Activated CD4-positive, alpha-beta T cell treated with anti-CD3 and anti-CD28 coated beads for 36 hours (primary cell): ENCODE measurements at regions of chr1 and their contacts with region 1.

Region 1: DNA sequence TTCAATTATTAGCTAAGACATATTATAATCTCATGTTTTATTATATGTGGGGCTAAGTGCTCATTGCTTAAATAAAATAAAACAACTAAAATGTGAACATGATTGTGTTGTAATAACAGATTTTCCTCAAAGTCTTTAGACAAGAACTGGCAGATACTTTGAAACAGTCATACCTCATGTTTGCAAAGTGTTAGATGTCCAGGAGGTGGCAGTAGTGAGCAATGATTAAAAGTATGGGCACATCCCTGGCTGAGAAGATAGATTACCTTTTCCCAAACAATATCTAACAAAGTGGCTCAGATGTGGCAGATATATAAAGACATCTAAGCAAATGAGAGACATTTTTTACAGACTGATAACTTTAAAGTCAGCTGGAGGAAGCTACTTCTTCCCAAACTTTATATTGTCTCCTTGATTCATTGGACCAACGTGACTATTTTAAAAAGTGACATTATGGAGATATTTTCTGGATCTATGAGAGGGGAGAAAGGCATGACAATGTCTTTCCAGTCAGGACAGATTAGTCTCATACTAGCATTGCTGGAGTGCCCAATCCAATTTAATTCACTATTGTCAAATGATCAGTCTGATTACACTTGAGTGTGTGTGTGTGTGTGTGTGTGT is 269.8 kb downstream of the S1PR1 start:
- DNase-seq: peak; percentile 45
- ATAC-seq: peak; percentile 68
- H3K4me3 Mint-ChIP-seq: no peak overlapping the region
- H3K27ac Mint-ChIP-seq: no peak overlapping the region
- H3K4me1 Mint-ChIP-seq: no peaks in the 10 kb centered on the region
- H3K27me3 Mint-ChIP-seq: no peaks in the 10 kb centered on the region

Region 2: DNA sequence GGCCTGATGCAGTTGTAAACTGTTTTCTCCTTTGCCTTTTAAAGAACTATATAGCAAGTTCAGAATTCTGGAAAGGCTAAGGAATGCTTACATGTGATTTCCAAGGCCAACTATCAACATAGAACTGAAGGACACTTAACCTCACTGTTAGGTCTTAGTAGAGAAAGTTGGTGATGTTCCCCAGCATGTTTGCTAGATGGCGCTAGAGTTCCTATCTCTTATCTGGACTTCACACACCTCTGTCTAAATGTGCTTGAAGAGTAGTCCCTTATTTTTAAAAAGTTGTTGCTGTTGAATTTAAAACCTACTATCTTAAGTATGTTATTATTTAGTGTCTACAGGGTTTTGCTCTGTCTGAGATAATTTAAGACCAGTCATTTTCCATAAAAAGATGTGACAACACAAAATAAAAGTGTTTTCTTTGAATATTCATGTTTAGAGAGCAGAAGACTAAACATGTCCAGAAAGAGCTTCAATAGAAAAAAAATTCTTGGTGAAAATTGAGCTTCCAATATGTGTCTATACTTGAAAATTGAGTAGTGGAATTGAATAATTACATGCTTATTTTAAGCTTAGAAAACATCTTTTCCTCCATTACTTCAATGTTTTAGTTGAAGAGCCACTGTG is 32.5 kb before region 1 on chr1:
- CTCF ChIA-PET with region 1: interaction called, 11 read pairs
- POLR2A ChIA-PET with region 1: no interaction called
- intact Hi-C with region 1: no loop called
- DNase-seq: no peak
- ATAC-seq: peak; percentile 53
- H3K4me3 Mint-ChIP-seq: no peak overlapping the region
- H3K27ac Mint-ChIP-seq: no peak overlapping the region
- H3K4me1 Mint-ChIP-seq: no peaks in the 10 kb centered on the region
- H3K27me3 Mint-ChIP-seq: no peaks in the 10 kb centered on the region

Region 3: DNA sequence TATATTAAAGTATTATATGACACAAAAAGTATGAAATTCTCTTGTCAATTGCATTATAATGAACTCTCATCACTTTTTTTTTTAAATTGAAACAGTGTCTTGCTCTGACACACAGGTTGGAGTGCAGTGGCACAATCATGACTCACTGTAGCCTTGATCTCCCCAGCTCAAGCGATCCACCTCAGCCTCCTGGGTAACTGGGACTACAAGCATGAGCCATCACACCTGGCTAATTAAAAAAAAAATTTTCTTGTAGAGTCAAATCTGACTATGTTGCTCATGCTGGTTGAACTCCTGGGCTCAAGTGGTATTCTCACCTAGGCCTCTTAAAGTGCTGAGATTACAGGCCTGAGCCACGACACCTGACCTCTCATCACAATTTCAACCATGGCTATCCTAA is 10.5 kb before region 1 on chr1:
- CTCF ChIA-PET with region 1: interaction called, 10 read pairs
- POLR2A ChIA-PET with region 1: no interaction called
- intact Hi-C with region 1: no loop called
- DNase-seq: peak; percentile 47
- ATAC-seq: peak; percentile 96
- H3K4me3 Mint-ChIP-seq: no peak overlapping the region
- H3K27ac Mint-ChIP-seq: no peak overlapping the region
- H3K4me1 Mint-ChIP-seq: no peaks in the 10 kb centered on the region
- H3K27me3 Mint-ChIP-seq: peaks cover 2% of the 10 kb centered on the region

Region 4: DNA sequence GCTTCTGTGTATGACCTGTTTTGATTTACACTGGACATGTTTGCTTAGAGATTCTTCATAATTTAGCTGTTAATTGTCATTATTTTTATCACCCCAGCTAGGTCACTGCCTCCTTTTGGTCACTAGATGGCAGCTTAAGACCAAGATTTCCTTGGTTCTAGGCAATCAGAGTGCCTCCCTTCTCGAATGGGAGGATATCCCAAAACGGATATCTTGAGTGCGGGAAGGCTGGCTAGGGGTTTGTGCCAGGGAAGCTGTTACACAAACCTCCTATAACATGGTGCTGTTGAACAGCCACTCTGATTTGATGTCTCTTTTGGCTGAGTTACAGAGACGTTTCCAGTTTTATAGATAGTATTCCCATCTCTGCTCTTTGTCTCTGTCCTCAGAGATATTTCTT is 13.6 kb after region 1 on chr1:
- CTCF ChIA-PET with region 1: interaction called, 21 read pairs
- POLR2A ChIA-PET with region 1: no interaction called
- intact Hi-C with region 1: no loop called
- DNase-seq: peak; percentile 21
- ATAC-seq: peak; percentile 72
- H3K4me3 Mint-ChIP-seq: no peak overlapping the region
- H3K27ac Mint-ChIP-seq: no peak overlapping the region
- H3K4me1 Mint-ChIP-seq: peaks cover 7% of the 10 kb centered on the region
- H3K27me3 Mint-ChIP-seq: peaks cover 4% of the 10 kb centered on the region

Region 5: DNA sequence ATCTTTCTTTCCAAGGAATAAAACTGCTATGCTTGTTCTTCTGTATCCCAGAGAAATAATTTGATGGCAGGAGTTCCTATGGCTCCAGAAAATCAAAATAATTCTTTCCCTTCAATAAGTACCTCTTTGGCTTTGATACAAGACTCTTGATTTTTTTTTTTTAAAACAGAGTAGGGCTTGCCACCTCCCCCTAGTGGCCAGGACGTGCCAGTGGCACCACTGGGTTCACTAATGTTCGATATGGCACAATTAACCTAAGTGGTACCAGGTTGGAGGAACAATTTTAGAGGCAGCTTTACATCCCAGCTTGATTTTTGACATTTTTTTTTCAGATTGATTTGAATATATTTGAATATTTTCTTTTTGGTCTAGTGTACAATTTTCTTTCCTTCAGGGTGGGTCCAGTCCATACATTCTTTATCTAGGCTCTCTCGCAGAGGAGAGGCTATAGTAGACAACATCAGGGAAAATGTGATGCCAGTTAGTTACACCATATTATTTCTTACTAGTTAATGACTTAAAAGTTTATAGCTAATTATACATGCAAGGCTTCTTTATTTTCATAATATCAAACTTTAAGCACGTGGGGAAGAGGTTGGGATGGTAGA is 61.0 kb after region 1 on chr1:
- CTCF ChIA-PET with region 1: interaction called, 8 read pairs
- POLR2A ChIA-PET with region 1: no interaction called
- intact Hi-C with region 1: loop called (anchors 2 kb)
- DNase-seq: peak; percentile 68
- ATAC-seq: peak; percentile 81
- H3K4me3 Mint-ChIP-seq: no peak overlapping the region
- H3K27ac Mint-ChIP-seq: no peak overlapping the region
- H3K4me1 Mint-ChIP-seq: no peaks in the 10 kb centered on the region
- H3K27me3 Mint-ChIP-seq: peaks cover 9% of the 10 kb centered on the region

Region 6: DNA sequence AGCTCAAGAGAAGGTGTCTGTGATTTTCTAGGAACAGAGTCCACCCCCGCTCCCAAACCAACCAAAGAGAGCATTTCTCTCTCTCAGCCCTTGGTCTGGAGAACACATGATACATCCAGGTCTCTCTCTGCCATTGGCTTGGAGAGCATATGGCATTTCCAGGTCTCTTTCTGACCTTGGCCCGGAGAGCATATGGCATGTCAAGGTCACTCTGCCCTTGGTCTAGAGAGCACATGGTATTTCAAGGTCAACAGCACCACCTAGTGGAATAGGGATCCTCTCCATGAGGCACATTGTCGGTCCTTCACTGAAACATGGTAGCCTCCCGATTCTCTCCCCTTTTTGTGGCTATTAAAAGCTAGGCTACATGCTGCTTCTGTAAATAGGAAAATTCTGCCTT is 927.8 kb after region 1 on chr1:
- CTCF ChIA-PET with region 1: no interaction called
- POLR2A ChIA-PET with region 1: no interaction called
- intact Hi-C with region 1: loop called in 1 of 2 experiments (anchors 1 kb)
- DNase-seq: peak; percentile 8
- ATAC-seq: no peak
- H3K4me3 Mint-ChIP-seq: no peak overlapping the region
- H3K27ac Mint-ChIP-seq: no peak overlapping the region
- H3K4me1 Mint-ChIP-seq: no peaks in the 10 kb centered on the region
- H3K27me3 Mint-ChIP-seq: no peaks in the 10 kb centered on the region